MCF 10A (cell line): ENCODE measurements at regions of chr18 and their contacts with region 1.

Region 1: DNA sequence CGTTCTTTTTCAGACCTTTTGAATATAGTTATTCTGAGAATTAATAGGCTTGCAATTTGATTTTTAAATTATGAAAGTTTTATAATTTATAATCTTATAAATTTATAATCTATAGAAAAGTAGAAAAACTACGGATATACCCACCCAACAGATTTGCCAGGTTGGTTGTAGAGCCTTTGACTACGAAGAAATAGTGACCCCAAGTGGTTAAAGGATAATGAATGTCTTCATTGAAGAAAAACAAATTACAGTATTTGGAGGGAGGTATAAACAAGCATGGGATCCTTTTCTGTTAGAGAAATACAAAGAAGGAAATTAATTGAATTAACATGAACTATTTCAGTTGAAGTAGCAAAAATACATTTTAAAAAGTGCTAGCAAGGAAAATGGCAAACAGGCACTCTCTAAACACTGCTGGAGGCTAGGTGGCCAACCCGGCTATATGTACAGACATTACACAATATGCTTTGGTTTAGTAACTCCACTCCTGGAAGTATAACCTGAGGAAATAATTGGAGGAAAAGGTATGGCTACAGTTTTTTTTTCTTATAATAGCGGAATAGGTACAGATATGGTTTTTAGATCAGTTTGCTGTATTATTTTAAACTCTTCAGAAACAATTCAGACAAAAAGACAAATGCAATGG is 110.9 kb downstream of the MIB1 start:
- DNase-seq: peak; percentile 25
- H3K4me3 Mint-ChIP-seq: no peak overlapping the region
- H3K27ac Mint-ChIP-seq: no peak overlapping the region
- H3K4me1 Mint-ChIP-seq: no peaks in the 10 kb centered on the region
- H3K27me3 Mint-ChIP-seq: no peaks in the 10 kb centered on the region
- CTCF ChIP-seq: peak; percentile 29

Region 2: DNA sequence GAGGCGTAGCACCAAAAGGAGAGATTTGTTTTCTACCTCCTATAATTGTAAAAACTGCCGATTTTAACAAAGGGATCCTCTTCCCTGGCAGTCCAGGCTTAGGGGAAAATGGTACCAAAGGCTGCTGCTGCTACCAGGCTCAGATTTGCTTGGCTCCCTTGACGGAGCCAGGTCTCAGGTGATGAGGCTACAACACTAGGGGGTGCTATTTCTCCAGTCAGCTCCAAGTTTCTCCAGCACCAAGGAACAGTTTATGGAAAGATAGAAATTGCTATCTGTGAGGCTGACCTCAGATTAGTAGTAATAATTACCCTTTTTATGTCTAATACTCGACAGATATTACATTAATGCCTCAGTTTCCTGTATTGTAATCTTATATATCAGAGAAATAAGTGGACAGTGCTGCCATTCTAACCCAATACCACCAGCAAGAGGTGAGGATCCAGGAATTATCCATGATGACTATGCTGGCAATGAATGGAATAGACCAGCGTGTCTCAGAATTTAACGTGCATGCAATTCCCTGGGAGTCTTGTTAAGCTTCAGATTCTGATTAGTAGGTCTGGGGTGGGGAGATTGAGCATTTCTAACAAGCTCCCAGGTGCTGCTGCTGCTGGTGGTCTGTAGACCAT is 362.2 kb before region 1 on chr18:
- CTCF ChIA-PET with region 1: no interaction called
- POLR2A ChIA-PET with region 1: no interaction called
- intact Hi-C with region 1: loop called (anchors 1 kb)
- DNase-seq: peak; percentile 74
- H3K4me3 Mint-ChIP-seq: no peak overlapping the region
- H3K27ac Mint-ChIP-seq: no peak overlapping the region
- H3K4me1 Mint-ChIP-seq: peaks cover 8% of the 10 kb centered on the region
- H3K27me3 Mint-ChIP-seq: no peaks in the 10 kb centered on the region
- CTCF ChIP-seq: peak; percentile 67

Region 3: DNA sequence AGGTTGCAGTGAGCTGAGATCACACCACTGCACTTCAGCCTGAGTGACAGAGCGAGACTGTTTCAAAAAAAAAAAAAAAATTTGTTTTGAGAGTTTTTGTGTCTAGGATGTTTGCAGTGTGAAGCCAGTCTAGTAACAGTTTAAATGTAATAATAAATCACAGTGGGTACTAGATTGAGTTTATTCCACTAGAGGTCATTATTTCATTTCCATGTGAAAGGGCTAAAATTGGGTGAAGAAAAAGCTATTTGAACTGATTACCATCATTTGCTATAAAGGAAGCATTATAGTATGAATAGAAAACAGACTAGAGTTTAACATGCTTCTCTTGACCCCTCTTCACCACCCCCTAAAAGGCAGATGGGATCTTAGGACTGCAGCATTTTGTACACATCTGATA is 219.1 kb before region 1 on chr18:
- CTCF ChIA-PET with region 1: interaction called, 3 read pairs
- POLR2A ChIA-PET with region 1: no interaction called
- intact Hi-C with region 1: loop called (anchors 10 kb)
- DNase-seq: no peak
- H3K4me3 Mint-ChIP-seq: no peak overlapping the region
- H3K27ac Mint-ChIP-seq: no peak overlapping the region
- H3K4me1 Mint-ChIP-seq: no peaks in the 10 kb centered on the region
- H3K27me3 Mint-ChIP-seq: no peaks in the 10 kb centered on the region
- CTCF ChIP-seq: no peak

Region 4: DNA sequence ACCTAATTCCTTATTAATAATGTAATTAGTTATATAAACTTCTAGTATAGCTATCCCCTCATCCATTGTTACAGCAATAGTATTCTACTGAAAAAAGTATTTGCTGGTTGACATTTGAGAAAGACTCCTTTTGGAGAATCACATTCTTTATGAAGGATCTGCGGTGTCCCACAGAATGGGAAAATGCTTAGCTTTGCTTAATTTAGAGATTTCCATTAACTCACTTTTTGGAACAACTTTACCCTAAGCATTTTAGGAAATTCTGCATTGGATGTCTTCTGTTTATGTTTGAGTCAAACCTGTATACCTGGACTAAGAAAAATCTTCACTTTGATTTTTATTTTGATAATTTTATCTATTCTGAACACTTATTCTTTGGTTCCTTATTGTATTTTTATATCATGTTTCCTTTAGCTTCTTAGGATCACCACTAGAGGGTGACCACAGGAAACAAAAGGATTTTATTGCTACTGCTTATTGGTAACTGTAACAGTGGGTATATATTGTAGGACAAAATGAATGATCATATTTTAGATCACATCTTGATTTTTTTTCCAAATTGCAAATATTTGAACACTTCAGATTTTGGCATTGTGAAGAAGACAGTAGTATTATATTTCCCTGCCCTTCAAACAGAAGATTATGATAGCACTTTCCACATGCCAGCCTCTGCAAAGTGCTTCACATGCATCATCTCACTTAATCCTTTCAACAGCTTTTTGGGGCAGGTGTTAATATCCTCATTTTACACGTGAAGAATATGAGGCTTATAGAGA is 31.2 kb before region 1 on chr18:
- CTCF ChIA-PET with region 1: interaction called, 25 read pairs
- POLR2A ChIA-PET with region 1: interaction called, 5 read pairs
- intact Hi-C with region 1: no loop called
- DNase-seq: peak; percentile 30
- H3K4me3 Mint-ChIP-seq: no peak overlapping the region
- H3K27ac Mint-ChIP-seq: no peak overlapping the region
- H3K4me1 Mint-ChIP-seq: no peaks in the 10 kb centered on the region
- H3K27me3 Mint-ChIP-seq: no peaks in the 10 kb centered on the region
- CTCF ChIP-seq: peak; percentile 39

Region 5: GRCh38 chr18:22169007-22169864 is 317.8 kb after region 1 on chr18 and contains the start of gene GATA6:
- CTCF ChIA-PET with region 1: no interaction called
- POLR2A ChIA-PET with region 1: no interaction called
- intact Hi-C with region 1: no loop called
- DNase-seq: peak; percentile 89
- H3K4me3 Mint-ChIP-seq: peak within 1 kb of the TSS; percentile 97
- H3K27ac Mint-ChIP-seq: peak within 1 kb of the TSS; percentile 78
- H3K4me1 Mint-ChIP-seq: peaks cover 6% of the 10 kb centered on the region
- H3K27me3 Mint-ChIP-seq: no peaks in the 10 kb centered on the region
- CTCF ChIP-seq: peak; percentile 25
- total RNA-seq, gene GATA6: 6.7 and 14.0 TPM in 2 replicates